CD8-positive, alpha-beta T cell (primary cell): ENCODE measurements at regions of chr7 and their contacts with region 1.

Region 1: GRCh38 chr7:16918288-16918895 is 36.6 kb upstream of the AGR3 start:
- DNase-seq: peak in 3 of 9 experiments; percentile 19 to 40 (median 27)
- ATAC-seq: no peak
- H3K4me3 ChIP-seq: no peak overlapping the region
- H3K4me3 Mint-ChIP-seq: no peak overlapping the region
- H3K27ac ChIP-seq: no peak overlapping the region
- H3K27ac Mint-ChIP-seq: no peak overlapping the region
- H3K4me1 ChIP-seq: no peaks in the 10 kb centered on the region
- H3K4me1 Mint-ChIP-seq: peaks cover 3% of the 10 kb centered on the region
- H3K27me3 ChIP-seq: no peaks in the 10 kb centered on the region
- H3K27me3 Mint-ChIP-seq: no peaks in the 10 kb centered on the region
- CTCF ChIP-seq: peak; percentile 76

Region 2: GRCh38 chr7:16078076-16078952 is 840.1 kb before region 1 on chr7:
- CTCF ChIA-PET with region 1: no interaction called
- POLR2A ChIA-PET with region 1: no interaction called
- intact Hi-C with region 1: loop called in 1 of 2 experiments (anchors 5 kb)
- DNase-seq: peak in 3 of 9 experiments; percentile 10 to 61 (median 51)
- ATAC-seq: no peak
- H3K4me3 ChIP-seq: no peak overlapping the region
- H3K4me3 Mint-ChIP-seq: no peak overlapping the region
- H3K27ac ChIP-seq: no peak overlapping the region
- H3K27ac Mint-ChIP-seq: no peak overlapping the region
- H3K4me1 ChIP-seq: no peaks in the 10 kb centered on the region
- H3K4me1 Mint-ChIP-seq: peaks cover 3% of the 10 kb centered on the region
- H3K27me3 ChIP-seq: no peaks in the 10 kb centered on the region
- H3K27me3 Mint-ChIP-seq: no peaks in the 10 kb centered on the region
- CTCF ChIP-seq: peak; percentile 54

Region 3: GRCh38 chr7:16114633-16115032 is 803.8 kb before region 1 on chr7:
- CTCF ChIA-PET with region 1: no interaction called
- POLR2A ChIA-PET with region 1: no interaction called
- intact Hi-C with region 1: loop called in 1 of 2 experiments (anchors 10 kb)
- DNase-seq: peak in 2 of 9 experiments; percentile 38 to 40
- ATAC-seq: no peak
- H3K4me3 ChIP-seq: no peak overlapping the region
- H3K4me3 Mint-ChIP-seq: no peak overlapping the region
- H3K27ac ChIP-seq: no peak overlapping the region
- H3K27ac Mint-ChIP-seq: no peak overlapping the region
- H3K4me1 ChIP-seq: no peaks in the 10 kb centered on the region
- H3K4me1 Mint-ChIP-seq: no peaks in the 10 kb centered on the region
- H3K27me3 ChIP-seq: no peaks in the 10 kb centered on the region
- H3K27me3 Mint-ChIP-seq: no peaks in the 10 kb centered on the region
- CTCF ChIP-seq: no peak

Region 4: GRCh38 chr7:16431646-16432424 is 486.6 kb before region 1 on chr7:
- CTCF ChIA-PET with region 1: interaction called, 3 read pairs
- POLR2A ChIA-PET with region 1: no interaction called
- intact Hi-C with region 1: loop called (anchors 2 to 5 kb)
- DNase-seq: peak in 4 of 9 experiments; percentile 20 to 68 (median 44)
- ATAC-seq: peak; percentile 83
- H3K4me3 ChIP-seq: no peak overlapping the region
- H3K4me3 Mint-ChIP-seq: no peak overlapping the region
- H3K27ac ChIP-seq: no peak overlapping the region
- H3K27ac Mint-ChIP-seq: no peak overlapping the region
- H3K4me1 ChIP-seq: no peaks in the 10 kb centered on the region
- H3K4me1 Mint-ChIP-seq: no peaks in the 10 kb centered on the region
- H3K27me3 ChIP-seq: no peaks in the 10 kb centered on the region
- H3K27me3 Mint-ChIP-seq: peaks cover 3% of the 10 kb centered on the region
- CTCF ChIP-seq: peak; percentile 37

Region 5: DNA sequence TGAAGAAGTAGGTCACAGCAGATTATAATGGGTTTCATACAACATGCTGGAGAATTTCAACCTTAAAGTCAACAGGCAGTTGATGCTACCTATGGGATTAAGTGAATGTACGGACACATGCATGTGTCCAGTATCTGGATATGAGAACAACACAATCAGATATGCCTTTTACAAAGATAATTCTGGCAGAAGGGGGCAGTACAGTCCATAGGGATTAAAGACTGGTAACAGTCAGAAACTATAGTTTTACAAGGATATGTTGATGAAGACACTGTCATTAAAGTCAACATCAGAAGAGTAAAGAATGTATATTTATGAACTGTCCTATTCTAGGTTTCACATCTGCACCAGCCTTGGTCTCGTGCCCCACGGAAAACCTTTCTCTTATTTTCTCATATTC is 314.3 kb before region 1 on chr7:
- CTCF ChIA-PET with region 1: interaction called, 4 read pairs
- POLR2A ChIA-PET with region 1: no interaction called
- intact Hi-C with region 1: loop called in 1 of 2 experiments (anchors 2 kb)
- DNase-seq: peak in 2 of 9 experiments; percentile 13 to 17
- ATAC-seq: no peak
- H3K4me3 ChIP-seq: no peak overlapping the region
- H3K4me3 Mint-ChIP-seq: no peak overlapping the region
- H3K27ac ChIP-seq: no peak overlapping the region
- H3K27ac Mint-ChIP-seq: no peak overlapping the region
- H3K4me1 ChIP-seq: no peaks in the 10 kb centered on the region
- H3K4me1 Mint-ChIP-seq: no peaks in the 10 kb centered on the region
- H3K27me3 ChIP-seq: no peaks in the 10 kb centered on the region
- H3K27me3 Mint-ChIP-seq: no peaks in the 10 kb centered on the region
- CTCF ChIP-seq: peak; percentile 21

Region 6: DNA sequence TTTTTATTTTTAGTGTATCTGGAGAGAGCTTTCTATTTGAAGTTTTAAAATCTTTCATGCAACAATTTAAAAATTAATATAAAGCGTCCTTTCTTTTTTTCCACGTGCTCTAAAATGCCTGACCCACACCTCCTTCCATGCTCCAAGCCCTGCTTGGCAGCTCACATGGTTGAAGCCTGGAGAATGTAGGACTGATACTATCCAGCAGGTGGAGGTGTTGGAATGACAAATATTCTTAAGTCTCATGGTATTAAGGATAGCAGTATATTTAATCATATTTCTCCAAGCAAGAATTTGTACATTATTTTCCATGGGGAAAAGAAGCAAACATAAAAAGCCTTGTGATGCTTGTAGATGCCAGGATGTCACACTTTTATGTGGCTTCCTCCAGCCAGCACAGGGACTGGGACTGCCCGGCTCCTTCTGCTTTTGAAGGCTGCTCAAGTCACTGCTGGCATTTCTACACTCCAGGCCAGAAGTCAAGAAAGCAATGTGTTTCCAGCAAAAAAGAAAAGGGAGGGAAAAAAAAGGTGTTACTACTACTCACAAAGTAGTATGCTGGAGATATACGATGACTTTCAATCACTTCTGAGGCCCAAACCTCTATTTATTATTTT is 222.7 kb before region 1 on chr7:
- CTCF ChIA-PET with region 1: no interaction called
- POLR2A ChIA-PET with region 1: no interaction called
- intact Hi-C with region 1: loop called in 1 of 2 experiments (anchors 10 kb)
- DNase-seq: peak in 2 of 9 experiments; percentile 3 to 6
- ATAC-seq: no peak
- H3K4me3 ChIP-seq: no peak overlapping the region
- H3K4me3 Mint-ChIP-seq: no peak overlapping the region
- H3K27ac ChIP-seq: no peak overlapping the region
- H3K27ac Mint-ChIP-seq: no peak overlapping the region
- H3K4me1 ChIP-seq: no peaks in the 10 kb centered on the region
- H3K4me1 Mint-ChIP-seq: no peaks in the 10 kb centered on the region
- H3K27me3 ChIP-seq: no peaks in the 10 kb centered on the region
- H3K27me3 Mint-ChIP-seq: no peaks in the 10 kb centered on the region
- CTCF ChIP-seq: peak; percentile 35

Region 7: GRCh38 chr7:16891338-16891737 is 27.1 kb before region 1 on chr7:
- CTCF ChIA-PET with region 1: interaction called, 16 read pairs
- POLR2A ChIA-PET with region 1: no interaction called
- intact Hi-C with region 1: loop called in 1 of 2 experiments (anchors 1 kb)
- DNase-seq: peak in 3 of 9 experiments; percentile 5 to 52 (median 30)
- ATAC-seq: peak; percentile 62
- H3K4me3 ChIP-seq: no peak overlapping the region
- H3K4me3 Mint-ChIP-seq: no peak overlapping the region
- H3K27ac ChIP-seq: no peak overlapping the region
- H3K27ac Mint-ChIP-seq: no peak overlapping the region
- H3K4me1 ChIP-seq: no peaks in the 10 kb centered on the region
- H3K4me1 Mint-ChIP-seq: peaks cover 5% of the 10 kb centered on the region
- H3K27me3 ChIP-seq: no peaks in the 10 kb centered on the region
- H3K27me3 Mint-ChIP-seq: no peaks in the 10 kb centered on the region
- CTCF ChIP-seq: no peak

Region 8: GRCh38 chr7:17130281-17131059 is 212.1 kb after region 1 on chr7:
- CTCF ChIA-PET with region 1: no interaction called
- POLR2A ChIA-PET with region 1: no interaction called
- intact Hi-C with region 1: no loop called
- DNase-seq: no peak
- ATAC-seq: no peak
- H3K4me3 ChIP-seq: no peak overlapping the region
- H3K4me3 Mint-ChIP-seq: no peak overlapping the region
- H3K27ac ChIP-seq: no peak overlapping the region
- H3K27ac Mint-ChIP-seq: no peak overlapping the region
- H3K4me1 ChIP-seq: no peaks in the 10 kb centered on the region
- H3K4me1 Mint-ChIP-seq: peaks cover 7% of the 10 kb centered on the region
- H3K27me3 ChIP-seq: no peaks in the 10 kb centered on the region
- H3K27me3 Mint-ChIP-seq: no peaks in the 10 kb centered on the region
- CTCF ChIP-seq: no peak